ENCODE measurements at regions of chr20 and their contacts with region 1.

Region 1: DNA sequence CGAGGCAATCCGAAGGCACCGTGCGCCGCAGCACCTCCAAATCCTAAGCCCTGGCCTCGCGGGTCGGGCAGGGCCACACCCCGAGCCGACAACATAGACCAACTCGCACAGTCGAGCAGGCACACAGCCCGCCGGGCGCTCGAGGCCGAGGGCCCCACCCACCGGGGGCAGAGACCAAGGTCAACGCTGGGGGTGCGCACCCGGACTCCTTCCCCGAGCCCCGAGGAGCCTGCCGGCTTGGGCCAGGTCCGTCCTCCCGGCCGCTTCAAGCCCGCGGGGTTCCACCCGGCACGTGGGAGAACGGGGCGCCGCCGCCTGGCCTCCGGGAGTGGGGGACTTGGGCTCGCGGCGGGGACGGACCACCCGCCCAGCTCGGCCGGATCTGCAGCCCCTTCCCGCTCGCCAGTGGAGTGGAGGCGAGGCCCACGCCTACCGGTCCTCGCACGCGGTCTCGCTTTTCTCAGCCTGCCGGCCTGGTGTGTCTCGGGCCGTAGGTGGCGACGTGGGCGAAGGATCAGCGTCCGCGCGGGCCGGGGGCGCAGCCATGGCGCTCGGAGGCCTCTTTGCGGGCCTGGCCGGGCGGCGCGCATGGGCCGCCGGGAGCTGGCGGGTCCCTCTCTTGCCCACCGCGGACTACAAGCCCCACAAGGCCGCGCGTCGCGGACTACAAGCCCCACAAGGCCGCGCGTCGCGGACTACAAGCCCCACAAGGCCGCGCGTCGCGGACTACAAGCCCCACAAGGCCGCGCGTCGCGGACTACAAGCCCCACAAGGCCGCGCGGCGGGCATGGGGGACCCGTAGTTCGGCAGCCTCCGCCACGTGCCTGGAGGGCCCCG is at the start of gene UCKL1:
- DNase-seq: peak; percentile 91
- H3K4me3 Mint-ChIP-seq: peak within 1 kb of the TSS; percentile 79
- H3K27ac Mint-ChIP-seq: peak within 1 kb of the TSS; percentile 85
- H3K4me1 Mint-ChIP-seq: peaks cover 39% of the 10 kb centered on the region
- H3K27me3 Mint-ChIP-seq: no peaks in the 10 kb centered on the region
- total RNA-seq, gene UCKL1: 23.3 to 23.9 TPM

Region 2: DNA sequence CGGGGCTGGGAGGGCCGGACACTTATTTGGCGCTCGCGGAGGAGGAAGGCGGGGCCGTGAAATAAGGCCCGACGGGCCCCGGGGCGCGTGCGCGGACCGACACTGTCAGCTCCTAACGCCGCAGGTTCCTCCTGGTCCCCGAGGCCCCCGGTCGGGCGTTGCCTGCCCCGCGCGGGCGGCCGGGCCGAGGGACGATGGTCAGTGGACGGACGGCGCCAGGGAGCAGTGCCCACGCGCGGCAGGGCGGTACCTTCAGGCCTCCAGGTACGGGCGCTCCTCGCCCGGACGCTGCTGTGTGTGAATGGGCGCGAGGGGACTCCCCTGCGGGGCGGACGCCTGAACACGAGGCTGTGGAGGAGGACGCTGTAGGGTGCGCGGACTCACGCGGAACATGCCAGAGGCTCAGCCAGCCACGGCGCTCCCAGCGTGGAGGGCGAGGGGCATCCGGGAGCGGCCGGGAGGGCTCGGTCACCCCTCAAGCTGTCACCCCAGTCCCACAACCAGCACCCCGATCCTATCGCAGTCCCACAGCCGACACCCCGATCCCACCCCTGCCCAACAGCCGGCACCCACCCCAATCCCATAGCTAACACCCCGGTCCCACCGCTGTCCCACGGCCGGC is 328.8 kb before region 1 on chr20:
- CTCF ChIA-PET with region 1: no interaction called
- intact Hi-C with region 1: loop called (anchors 2 kb)
- DNase-seq: peak; percentile 94
- H3K4me3 Mint-ChIP-seq: peak overlapping the region; percentile 99
- H3K27ac Mint-ChIP-seq: peak overlapping the region; percentile 74
- H3K4me1 Mint-ChIP-seq: peaks cover 52% of the 10 kb centered on the region
- H3K27me3 Mint-ChIP-seq: no peaks in the 10 kb centered on the region

Region 3: DNA sequence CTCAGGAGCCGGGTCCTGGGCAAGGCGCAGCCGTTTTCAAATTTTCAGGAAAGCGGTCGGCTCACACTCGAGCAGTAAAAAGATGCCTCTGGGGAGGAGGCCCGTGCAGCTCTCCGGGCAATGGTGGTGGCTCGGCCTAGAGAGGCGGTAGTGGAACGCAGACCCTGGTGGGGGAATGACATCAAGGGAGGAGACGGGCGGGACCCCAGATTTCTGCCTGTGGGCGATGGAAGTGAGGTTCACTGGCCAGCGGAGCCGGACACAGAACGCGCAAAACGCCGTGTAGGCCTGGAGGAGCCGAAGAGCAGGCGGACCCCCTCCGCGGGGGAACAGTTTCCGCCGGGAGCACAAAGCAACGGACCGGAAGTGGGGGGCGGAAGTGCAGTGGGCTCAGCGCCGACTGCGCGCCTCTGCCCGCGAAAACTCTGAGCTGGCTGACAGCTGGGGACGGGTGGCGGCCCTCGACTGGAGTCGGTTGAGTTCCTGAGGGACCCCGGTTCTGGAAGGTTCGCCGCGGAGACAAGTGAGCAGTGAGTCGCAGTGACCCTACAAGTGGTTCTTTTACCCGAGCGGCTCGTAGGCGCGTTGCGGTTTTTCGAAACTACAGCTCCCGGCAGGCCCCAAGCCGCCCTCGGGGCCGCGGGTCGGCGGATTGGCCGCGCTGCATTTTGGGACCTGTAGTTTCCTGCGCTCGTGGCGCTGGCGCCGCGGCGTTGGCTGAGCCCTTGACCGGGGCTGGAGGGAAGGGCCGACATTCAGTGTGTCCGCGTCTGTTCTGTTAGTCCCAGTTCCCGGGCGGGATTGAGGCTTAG is 297.9 kb before region 1 on chr20 and contains the start of gene RTEL1:
- CTCF ChIA-PET with region 1: no interaction called
- intact Hi-C with region 1: loop called (anchors 5 kb)
- DNase-seq: peak; percentile 88
- H3K4me3 Mint-ChIP-seq: peak within 1 kb of the TSS; percentile 98
- H3K27ac Mint-ChIP-seq: peak within 1 kb of the TSS; percentile 93
- H3K4me1 Mint-ChIP-seq: peaks cover 38% of the 10 kb centered on the region
- H3K27me3 Mint-ChIP-seq: no peaks in the 10 kb centered on the region
- total RNA-seq, gene RTEL1: 33.6 to 34.8 TPM

Region 4: DNA sequence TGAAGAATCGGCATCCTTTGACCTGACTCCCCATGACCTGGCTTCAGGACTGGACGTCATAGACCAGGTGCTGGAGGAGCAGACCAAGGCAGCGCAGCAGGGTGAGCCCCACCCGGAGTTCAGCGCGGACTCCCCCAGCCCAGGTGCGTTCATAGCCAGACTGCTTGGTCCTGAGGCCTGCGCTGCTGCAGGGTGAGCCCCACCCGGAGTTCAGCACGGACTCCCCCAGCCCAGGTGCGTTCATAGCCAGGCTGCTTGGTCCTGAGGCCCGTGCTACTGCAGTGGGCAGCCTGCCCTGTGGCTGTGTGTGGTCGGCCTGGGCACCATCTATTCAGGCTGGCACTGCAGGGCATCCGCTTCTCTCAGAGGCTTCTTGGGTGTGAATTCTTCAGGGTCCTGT is 282.1 kb before region 1 on chr20:
- CTCF ChIA-PET with region 1: no interaction called
- intact Hi-C with region 1: no loop called
- DNase-seq: no peak
- H3K4me3 Mint-ChIP-seq: no peak overlapping the region
- H3K27ac Mint-ChIP-seq: no peak overlapping the region
- H3K4me1 Mint-ChIP-seq: no peaks in the 10 kb centered on the region
- H3K27me3 Mint-ChIP-seq: no peaks in the 10 kb centered on the region

Region 5: GRCh38 chr20:63894358-63895201 is 61.5 kb before region 1 on chr20 and contains the start of gene DNAJC5:
- CTCF ChIA-PET with region 1: no interaction called
- intact Hi-C with region 1: loop called (anchors 2 kb)
- DNase-seq: peak; percentile 94
- H3K4me3 Mint-ChIP-seq: peak within 1 kb of the TSS; percentile 95
- H3K27ac Mint-ChIP-seq: peak within 1 kb of the TSS; percentile 93
- H3K4me1 Mint-ChIP-seq: peaks cover 41% of the 10 kb centered on the region
- H3K27me3 Mint-ChIP-seq: no peaks in the 10 kb centered on the region
- total RNA-seq, gene DNAJC5: 19.4 to 19.5 TPM

Region 6: DNA sequence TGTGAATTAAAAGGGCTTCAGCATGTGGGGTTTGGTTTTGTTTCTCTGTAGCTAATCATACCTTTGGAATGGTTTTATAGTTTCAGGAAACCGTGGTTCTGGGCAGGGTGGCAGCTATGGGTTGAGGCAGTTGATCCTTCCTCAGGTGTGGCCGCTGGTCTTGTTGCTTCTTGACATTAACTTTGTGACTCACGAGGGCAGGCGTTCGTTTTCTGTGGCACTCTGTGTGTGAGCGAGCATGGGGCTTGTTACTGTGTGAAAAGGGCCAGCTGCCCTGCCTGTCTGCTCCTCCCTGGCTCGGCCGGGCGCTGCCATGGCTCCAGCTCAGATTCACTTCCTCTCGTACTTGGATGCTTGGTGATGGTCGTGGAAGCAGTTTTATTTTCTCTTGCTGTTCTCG is 44.9 kb before region 1 on chr20:
- CTCF ChIA-PET with region 1: no interaction called
- intact Hi-C with region 1: loop called (anchors 2 kb)
- DNase-seq: no peak
- H3K4me3 Mint-ChIP-seq: no peak overlapping the region
- H3K27ac Mint-ChIP-seq: no peak overlapping the region
- H3K4me1 Mint-ChIP-seq: peaks cover 39% of the 10 kb centered on the region
- H3K27me3 Mint-ChIP-seq: no peaks in the 10 kb centered on the region

Region 7: DNA sequence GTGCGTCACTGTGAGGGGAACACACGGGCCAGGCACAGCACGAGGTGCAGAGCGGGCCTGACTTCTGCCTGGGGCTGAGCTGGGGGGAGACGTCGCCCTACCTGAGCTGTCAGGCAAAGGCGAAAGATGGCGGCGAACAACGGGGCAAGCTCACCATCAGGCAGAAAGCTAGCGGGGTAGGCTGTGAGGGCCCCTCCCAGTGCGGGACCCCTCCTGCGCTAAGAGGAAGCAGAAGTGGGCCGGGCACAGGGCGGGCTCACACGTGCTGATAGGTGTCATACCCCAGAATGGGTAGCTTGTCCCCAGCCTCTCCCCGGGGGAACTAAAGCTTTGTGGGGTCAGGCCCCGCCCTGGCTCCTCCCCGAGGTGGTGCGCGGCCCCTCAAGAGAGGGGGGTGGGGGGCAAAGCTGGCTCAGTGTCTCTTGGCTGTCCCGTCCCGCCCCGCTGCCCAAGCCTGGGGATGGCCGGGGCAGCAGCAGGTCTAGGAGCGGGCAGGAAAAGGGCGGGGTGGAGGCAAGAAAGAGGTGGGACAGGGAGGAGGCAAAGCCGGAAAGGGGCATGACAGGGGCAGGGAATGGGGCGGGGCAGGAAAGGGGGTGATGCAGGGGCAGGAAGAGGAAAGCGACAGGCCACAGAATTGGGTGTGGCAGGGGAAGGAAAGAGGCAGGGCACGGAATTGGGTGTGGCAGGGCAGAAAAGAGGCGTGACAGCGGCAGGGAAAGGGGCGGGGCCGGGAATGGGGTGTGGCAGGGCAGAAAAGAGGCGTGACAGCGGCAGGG is 14.6 kb before region 1 on chr20:
- CTCF ChIA-PET with region 1: no interaction called
- intact Hi-C with region 1: no loop called
- DNase-seq: peak; percentile 84
- H3K4me3 Mint-ChIP-seq: no peak overlapping the region
- H3K27ac Mint-ChIP-seq: peak overlapping the region; percentile 71
- H3K4me1 Mint-ChIP-seq: peaks cover 10% of the 10 kb centered on the region
- H3K27me3 Mint-ChIP-seq: no peaks in the 10 kb centered on the region

Region 8: GRCh38 chr20:64062596-64063388 is 106.7 kb after region 1 on chr20 and contains the start of gene TCEA2:
- CTCF ChIA-PET with region 1: no interaction called
- intact Hi-C with region 1: loop called (anchors 1 kb)
- DNase-seq: peak; percentile 98
- H3K4me3 Mint-ChIP-seq: peak within 1 kb of the TSS; percentile 89
- H3K27ac Mint-ChIP-seq: peak within 1 kb of the TSS; percentile 54
- H3K4me1 Mint-ChIP-seq: peaks cover 47% of the 10 kb centered on the region
- H3K27me3 Mint-ChIP-seq: no peaks in the 10 kb centered on the region
- total RNA-seq, gene TCEA2: 16.7 to 18.2 TPM

Measured in activated naive CD4-positive, alpha-beta T cell treated with anti-CD3 and anti-CD28 coated beads for 36 hours (primary cell).